GM12878 (cell line): ENCODE measurements at regions of chr18 and their contacts with region 1.

Region 1: DNA sequence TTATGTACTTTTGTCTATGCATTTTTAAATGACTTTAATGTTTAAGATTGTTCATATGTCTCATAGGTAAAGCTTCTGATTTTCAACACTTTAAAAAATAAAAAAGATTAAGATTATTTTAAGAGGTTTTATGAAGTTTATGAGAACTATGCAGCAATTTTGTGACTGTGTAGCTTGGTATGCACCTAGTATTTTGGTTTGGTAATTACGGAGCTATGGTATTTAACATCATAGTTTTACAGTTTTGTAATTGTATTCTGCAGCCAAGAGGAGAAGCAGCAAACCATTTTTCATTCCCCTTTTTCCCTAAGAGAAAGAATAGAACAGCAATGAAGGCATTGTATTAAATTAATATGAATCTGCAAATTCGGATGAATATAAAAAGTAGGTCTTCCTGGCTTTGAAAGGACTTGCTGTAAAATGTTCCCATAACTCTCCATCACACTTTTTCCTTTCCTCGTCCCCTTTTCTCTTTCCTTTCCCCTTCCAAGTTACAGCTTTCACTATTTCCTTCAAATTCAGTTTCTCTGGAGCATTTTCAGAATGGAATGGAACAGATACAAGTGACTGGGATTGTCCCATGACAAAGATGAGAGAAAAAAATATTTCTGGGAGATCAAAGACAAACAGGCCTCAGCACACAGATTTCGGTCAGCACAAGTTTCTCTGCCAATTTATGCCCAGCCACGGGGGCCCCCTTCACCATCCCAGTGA is 26.1 kb upstream of the PIEZO2 start:
- DNase-seq: no peak
- ATAC-seq: no peak
- H3K4me3 ChIP-seq: no peak overlapping the region
- H3K27ac ChIP-seq: no peak overlapping the region
- H3K4me1 ChIP-seq: no peaks in the 10 kb centered on the region
- H3K27me3 ChIP-seq: peaks cover 0 to 2% of the 10 kb centered on the region in 2 experiments; a peak in 2 of 4 replicates
- CTCF ChIP-seq: no peak
- EP300 ChIP-seq: no peak
- POLR2A ChIP-seq: no peak
- RAD21 ChIP-seq: no peak

Region 2: DNA sequence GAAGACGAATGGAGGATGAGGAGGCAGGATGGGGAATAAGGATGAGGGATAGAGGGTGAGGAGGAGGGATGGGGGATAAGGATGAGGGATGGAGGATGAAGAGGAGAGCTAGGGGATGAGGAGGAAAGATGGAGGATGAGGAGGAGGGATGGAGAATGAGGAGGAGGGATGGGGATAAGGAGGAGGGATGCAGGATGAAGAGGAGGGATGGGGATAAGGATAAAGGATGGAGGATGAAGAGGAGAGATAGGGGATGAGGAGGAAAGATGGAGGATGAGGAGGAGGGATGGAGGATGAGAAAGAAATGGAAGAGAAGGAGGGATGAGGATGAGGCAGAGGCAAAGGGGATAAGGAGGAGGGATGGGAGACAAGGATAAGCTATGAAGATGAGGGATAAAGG is 419.6 kb before region 1 on chr18:
- CTCF ChIA-PET with region 1: no interaction called
- POLR2A ChIA-PET with region 1: interaction called, 15 read pairs
- RAD21 ChIA-PET with region 1: no interaction called
- SMC1A ChIA-PET with region 1: no interaction called
- in situ Hi-C with region 1: no loop called
- intact Hi-C with region 1: no loop called
- DNase-seq: no peak
- ATAC-seq: no peak
- H3K4me3 ChIP-seq: no peak overlapping the region
- H3K27ac ChIP-seq: no peak overlapping the region
- H3K4me1 ChIP-seq: no peaks in the 10 kb centered on the region
- H3K27me3 ChIP-seq: no peaks in the 10 kb centered on the region
- CTCF ChIP-seq: no peak
- EP300 ChIP-seq: no peak
- POLR2A ChIP-seq: no peak
- RAD21 ChIP-seq: no peak